ENCODE measurements at regions of chr11 and their contacts with region 1.

Region 1: GRCh38 chr11:84419616-84420015 is 1133.4 kb upstream of the CCDC90B start:
- DNase-seq: no peak
- ATAC-seq: no peak
- H3K4me3 ChIP-seq: no peak overlapping the region
- H3K27ac ChIP-seq: no peak overlapping the region
- H3K4me1 ChIP-seq: no peaks in the 10 kb centered on the region
- H3K27me3 ChIP-seq: no peaks in the 10 kb centered on the region
- CTCF ChIP-seq: no peak

Region 2: GRCh38 chr11:84333221-84333620 is 86.4 kb before region 1 on chr11:
- intact Hi-C with region 1: no loop called
- DNase-seq: no peak
- ATAC-seq: no peak
- H3K4me3 ChIP-seq: peak overlapping the region in 2 of 10 donors; percentile 1 to 7
- H3K27ac ChIP-seq: no peak overlapping the region
- H3K4me1 ChIP-seq: no peaks in the 10 kb centered on the region
- H3K27me3 ChIP-seq: no peaks in the 10 kb centered on the region
- CTCF ChIP-seq: no peak

Region 3: DNA sequence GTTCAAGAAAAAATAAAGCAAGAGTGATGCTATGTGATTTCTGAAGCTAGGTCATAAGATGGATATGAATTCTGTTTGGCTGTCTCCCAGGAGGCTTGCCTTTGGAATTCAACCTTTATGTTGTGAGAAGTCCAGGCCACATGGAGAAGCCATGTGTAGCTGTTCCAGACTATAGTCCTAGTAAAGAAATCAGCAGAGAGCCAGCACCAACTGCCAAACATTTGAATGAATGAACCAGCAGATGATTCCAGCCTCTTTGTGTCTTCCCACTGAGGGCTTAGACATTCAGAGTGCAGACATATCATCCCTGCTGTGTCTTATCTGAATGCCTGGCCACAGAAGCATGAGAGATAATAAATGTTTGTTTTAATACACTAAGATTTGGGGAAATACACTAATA is 57.0 kb after region 1 on chr11:
- intact Hi-C with region 1: loop called in 1 of 10 experiments (anchors 10 kb)
- DNase-seq: no peak
- ATAC-seq: no peak
- H3K4me3 ChIP-seq: no peak overlapping the region
- H3K27ac ChIP-seq: no peak overlapping the region
- H3K4me1 ChIP-seq: no peaks in the 10 kb centered on the region
- H3K27me3 ChIP-seq: no peaks in the 10 kb centered on the region
- CTCF ChIP-seq: no peak

Measured in heart right ventricle (tissue), 16 donors.